ENCODE measurements at regions of chr7 and their contacts with region 1.

Region 1: DNA sequence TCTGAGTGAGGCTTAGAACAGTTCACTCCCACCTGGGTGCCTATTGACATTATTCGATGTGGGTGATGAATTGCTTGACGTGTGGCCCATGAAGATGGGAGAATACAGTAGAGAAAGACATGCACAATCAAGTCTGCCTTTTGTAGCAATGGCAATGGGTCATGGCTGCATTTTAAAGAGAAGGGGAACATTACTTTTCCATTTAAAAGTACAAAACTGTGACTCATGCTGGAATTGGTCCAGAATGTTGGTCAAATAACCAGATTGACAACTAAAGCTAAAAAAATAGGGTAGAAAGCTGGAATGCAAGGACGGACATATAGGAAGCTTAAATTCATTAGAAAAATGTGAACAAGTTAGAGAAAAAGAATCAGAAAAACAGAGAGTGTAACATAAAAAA is 104.1 kb upstream of the SLC25A13 start:
- DNase-seq: no peak

Region 2: DNA sequence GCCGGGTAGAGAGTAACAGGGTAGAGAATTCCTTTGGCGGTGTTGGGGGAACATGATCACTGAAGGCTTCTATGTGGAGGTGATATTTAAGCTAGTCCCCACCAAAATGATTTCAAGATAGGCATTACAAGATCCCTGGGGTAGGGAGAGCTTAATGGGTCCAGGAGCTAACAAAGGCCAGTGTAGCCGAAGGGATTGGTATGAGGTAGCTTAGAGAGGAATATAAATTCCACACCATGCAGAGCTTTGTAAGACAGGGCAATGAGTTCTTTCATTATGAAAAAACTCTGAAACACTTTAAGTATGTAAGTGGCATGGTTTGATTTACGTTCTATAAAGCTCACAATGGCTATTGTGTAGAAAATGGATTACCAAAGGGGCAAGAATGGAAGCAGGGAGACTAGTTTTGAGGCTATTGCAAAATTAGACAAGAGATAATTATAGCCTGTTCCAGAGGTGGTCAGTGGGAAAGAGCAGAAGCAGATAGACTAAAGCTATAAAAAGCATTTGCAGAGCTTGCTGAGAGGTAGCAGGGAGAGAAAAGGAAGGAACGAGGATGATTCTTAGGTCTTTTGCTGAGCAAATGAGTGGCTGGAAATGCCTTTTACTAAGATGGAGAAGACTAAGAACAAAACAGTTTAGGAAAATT is 15.5 kb after region 1 on chr7:
- intact Hi-C with region 1: no loop called
- DNase-seq: no peak

Region 3: DNA sequence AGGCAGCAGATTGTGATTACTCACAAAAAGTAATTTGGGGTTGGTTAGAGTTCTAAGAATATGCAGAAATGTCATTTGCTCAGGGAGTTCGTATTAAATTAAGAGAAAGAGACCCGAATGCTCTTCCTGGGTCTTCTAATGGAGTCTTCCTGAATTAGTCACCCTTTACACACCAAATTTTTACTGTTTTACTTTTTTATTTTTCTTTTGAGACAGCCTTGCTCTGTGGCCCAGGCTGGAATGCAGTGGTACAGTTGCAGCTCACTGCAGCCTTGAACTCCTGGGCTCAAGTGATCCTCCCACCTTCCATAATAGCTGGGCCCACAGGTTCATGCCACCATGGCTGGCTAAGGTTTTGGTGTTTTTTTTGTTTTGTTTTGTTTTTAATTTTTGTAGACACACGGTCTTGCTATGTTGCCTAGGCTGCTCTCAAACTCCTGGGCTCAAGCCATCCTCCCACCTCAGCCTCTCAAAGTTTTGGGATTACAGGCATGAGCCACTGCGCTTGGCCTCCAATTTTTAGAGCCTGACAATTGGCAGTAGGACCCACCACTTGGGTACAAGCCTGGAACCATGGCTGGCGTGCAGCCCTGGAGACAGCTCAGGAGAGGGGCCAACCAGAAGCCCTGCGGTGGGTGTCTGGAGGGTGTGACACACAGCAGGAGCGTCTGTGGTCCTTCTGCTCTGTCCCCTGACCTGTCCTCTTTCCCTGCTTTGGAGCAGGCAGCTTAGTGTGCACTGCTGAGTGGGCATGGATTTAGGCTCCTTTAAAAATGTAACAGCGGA is 1768.8 kb after region 1 on chr7:
- intact Hi-C with region 1: loop called in 1 of 2 experiments (anchors 10 kb)
- DNase-seq: no peak

Measured in posterior vena cava (tissue), 2 donors.